ENCODE measurements at regions of chr9 and their contacts with region 1.

Region 1: GRCh38 chr9:2727966-2728613 is 10.8 kb downstream of the KCNV2 start:
- DNase-seq: peak; percentile 52
- H3K4me3 ChIP-seq: no peak overlapping the region
- H3K27ac ChIP-seq: no peak overlapping the region
- H3K4me1 ChIP-seq: peaks cover 17% of the 10 kb centered on the region
- H3K27me3 ChIP-seq: no peaks in the 10 kb centered on the region
- CTCF ChIP-seq: peak; percentile 11 to 26

Region 2: DNA sequence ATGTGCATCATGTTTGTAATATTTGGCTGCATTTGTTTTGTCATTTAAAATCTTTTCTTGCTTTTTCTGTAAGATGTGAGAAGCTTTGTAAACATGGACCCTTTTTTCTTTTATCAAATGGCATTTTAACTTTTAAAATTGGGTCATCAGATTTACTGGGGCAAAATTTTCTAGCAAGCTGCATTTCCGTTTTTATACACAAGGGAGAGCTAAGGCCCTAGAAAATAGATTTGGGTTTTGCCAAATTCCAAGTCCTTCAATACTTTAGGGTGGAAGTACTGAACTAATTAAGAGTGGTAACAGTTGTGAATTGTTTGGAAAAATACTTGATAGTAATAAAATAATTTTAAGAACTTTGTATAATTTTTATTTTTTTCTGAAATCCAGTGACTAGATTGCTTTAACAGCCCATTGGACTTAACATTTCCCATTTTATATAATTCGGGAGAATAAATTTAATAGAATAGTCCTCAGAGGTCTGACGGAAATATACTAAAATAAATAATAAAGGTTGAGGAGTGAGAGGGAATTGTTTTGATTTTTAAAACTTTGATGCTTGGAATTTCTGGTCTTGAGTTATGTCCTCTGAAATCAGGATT is 595.5 kb before region 1 on chr9:
- CTCF ChIA-PET with region 1: no interaction called
- dilution Hi-C with region 1: no loop called
- in situ Hi-C with region 1: no loop called
- intact Hi-C with region 1: loop called (anchors 5 kb)
- DNase-seq: no peak
- H3K4me3 ChIP-seq: no peak overlapping the region
- H3K27ac ChIP-seq: no peak overlapping the region
- H3K4me1 ChIP-seq: no peaks in the 10 kb centered on the region
- H3K27me3 ChIP-seq: no peaks in the 10 kb centered on the region
- CTCF ChIP-seq: peak; percentile 75 to 76

Region 3: GRCh38 chr9:2241836-2242741 is 486.0 kb before region 1 on chr9:
- CTCF ChIA-PET with region 1: no interaction called
- dilution Hi-C with region 1: no loop called
- in situ Hi-C with region 1: no loop called
- intact Hi-C with region 1: loop called (anchors 5 kb)
- DNase-seq: peak; percentile 86
- H3K4me3 ChIP-seq: peak overlapping the region; percentile 30 to 52 (median 49)
- H3K27ac ChIP-seq: peak overlapping the region; percentile 22
- H3K4me1 ChIP-seq: peaks cover 9% of the 10 kb centered on the region
- H3K27me3 ChIP-seq: no peaks in the 10 kb centered on the region
- CTCF ChIP-seq: no peak

Region 4: DNA sequence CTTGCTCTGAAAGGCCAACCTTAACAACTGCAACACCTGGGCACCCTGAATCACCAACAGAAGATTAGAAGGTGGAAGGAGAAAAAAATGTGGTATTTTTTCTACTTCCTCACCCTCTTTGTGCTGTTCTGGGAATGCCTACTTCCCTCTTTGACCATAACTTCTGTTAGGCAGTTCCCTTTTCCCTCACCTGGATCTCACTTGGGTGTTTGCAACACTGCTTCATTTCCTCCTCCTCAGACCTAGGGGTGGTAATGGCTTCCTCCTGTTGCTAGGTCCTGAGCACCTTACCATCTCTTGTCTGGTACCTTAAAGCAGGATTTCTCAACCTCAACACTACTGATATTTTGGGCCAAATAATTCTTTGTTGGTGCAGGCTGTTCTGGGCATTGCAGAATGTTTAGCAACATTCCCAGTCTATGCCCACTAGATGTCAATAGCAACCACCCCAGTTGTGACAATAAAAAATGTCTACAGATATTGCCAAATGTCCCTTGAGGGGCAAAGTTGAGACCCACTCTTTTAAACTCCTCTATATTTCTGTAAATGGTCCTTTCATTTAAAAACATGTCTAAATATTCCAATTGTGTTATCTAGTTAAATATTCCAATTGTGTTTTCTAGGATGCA is 406.5 kb before region 1 on chr9:
- CTCF ChIA-PET with region 1: no interaction called
- dilution Hi-C with region 1: no loop called
- in situ Hi-C with region 1: no loop called
- intact Hi-C with region 1: loop called (anchors 10 kb)
- DNase-seq: no peak
- H3K4me3 ChIP-seq: no peak overlapping the region
- H3K27ac ChIP-seq: no peak overlapping the region
- H3K4me1 ChIP-seq: peaks cover 8% of the 10 kb centered on the region
- H3K27me3 ChIP-seq: no peaks in the 10 kb centered on the region
- CTCF ChIP-seq: peak in 1 of 2 donors; percentile 33

Region 5: DNA sequence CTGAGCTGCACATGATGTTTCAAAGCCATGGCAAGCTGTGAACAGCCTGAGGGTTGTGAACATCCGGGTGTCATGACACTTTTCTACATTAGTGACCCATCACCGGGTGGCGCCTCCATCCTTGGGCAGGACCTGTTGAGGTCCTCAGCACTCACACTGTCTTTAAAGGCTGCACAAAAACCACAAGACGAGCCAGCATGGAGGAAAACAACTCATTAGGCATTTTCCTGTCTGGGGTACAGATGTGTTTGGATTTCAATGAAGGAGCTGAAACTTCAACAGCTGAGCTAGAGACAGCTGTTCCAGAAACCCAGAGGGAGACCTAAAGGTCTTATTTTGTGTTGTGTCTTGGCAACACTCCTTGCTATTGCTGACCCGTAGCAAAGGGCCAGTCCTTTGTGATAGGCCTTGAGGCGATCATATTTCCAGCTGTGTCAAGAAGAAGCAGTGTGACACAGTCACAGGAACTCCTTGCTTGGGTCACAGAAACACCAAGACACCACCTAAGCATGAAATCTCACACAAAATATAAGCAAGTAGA is 258.3 kb before region 1 on chr9:
- CTCF ChIA-PET with region 1: no interaction called
- dilution Hi-C with region 1: no loop called
- in situ Hi-C with region 1: no loop called
- intact Hi-C with region 1: loop called (anchors 2 kb)
- DNase-seq: peak; percentile 40
- H3K4me3 ChIP-seq: no peak overlapping the region
- H3K27ac ChIP-seq: no peak overlapping the region
- H3K4me1 ChIP-seq: no peaks in the 10 kb centered on the region
- H3K27me3 ChIP-seq: peaks cover 4% of the 10 kb centered on the region
- CTCF ChIP-seq: peak in 1 of 2 donors; percentile 38

Region 6: DNA sequence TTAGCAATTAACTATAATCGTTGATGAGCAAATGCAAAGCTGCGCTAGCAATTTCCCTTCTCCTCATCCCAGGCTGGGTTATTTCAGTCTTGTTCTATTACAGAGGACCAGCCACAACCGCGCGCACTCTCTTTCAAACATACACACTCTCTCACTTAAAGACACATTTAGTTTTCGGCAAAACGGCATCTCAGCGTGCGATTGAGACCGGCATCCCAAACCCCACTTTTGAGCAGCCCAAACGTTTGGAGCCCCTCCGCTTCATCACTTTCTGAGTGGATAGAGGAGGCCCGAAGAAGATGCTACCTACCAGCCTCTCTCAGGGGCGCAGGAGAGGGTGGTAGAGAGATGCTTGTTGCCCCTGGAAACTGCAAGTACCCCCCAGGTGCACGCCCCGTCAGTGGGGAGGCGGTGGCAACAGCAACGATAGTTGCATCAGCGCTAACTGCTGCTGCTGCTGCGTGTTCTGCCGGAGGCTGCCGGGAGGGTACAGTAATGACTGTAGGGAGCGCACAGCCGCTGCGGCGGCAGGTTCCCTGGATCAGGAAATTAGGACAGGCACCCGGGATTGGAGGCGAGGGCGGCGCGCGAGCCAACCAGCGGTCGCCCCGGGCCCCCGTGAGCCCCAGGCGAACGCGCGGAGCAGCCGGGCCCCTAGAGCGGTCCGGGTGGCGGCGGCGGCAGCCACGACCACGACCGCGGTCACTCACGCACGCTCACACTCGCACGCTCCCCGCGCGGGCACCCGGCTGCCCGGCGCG is 107.0 kb before region 1 on chr9:
- CTCF ChIA-PET with region 1: no interaction called
- dilution Hi-C with region 1: no loop called
- in situ Hi-C with region 1: no loop called
- intact Hi-C with region 1: loop called (anchors 5 kb)
- DNase-seq: peak; percentile 76
- H3K4me3 ChIP-seq: peak overlapping the region; percentile 66 to 86 (median 80)
- H3K27ac ChIP-seq: no peak overlapping the region
- H3K4me1 ChIP-seq: peaks cover 18% of the 10 kb centered on the region
- H3K27me3 ChIP-seq: no peaks in the 10 kb centered on the region
- CTCF ChIP-seq: no peak

Measured in mammary epithelial cell (primary cell).